ENCODE measurements at regions of chr5 and their contacts with region 1.

Region 1: DNA sequence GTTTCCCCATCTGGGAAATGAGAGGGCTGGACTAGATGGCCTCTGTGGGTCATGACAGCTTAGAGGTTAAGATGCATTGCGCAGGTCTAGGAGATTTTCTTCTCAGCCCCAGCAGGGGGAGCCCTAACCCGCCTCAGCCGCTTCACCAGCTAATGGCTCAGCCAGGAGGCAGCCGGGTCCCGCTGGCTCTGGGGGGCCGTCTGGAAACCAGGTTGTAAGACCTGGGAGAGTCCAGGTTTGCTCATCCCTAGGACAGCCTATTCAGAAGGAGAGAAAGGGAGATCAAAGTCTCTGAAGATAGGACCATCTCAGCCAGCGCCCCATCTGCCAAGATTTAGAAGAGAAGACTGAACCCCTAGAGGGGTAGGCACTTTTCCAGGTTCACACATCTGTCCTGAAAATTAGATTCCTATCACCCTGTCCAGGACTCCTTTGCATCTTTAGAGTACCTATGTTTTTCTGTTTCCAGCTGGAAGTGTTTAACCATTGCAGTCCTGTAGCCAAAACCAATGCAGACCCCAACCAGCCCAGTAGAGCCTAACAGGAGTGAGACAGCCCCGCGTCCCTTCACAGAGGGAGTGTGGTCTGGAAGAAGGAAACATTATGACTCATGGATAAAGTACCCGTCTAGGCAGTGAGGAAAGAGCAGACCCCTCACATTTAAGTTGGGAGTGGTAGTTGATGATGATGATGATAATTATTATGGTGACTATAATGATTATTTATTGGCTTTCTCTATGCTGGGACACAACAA is 27.5 kb downstream of the SPARC start:
- DNase-seq: peak; percentile 50 to 87
- H3K4me3 ChIP-seq: no peak overlapping the region
- H3K27ac ChIP-seq: peak overlapping the region; percentile 72 to 93
- H3K4me1 ChIP-seq: peaks cover 5 to 19% of the 10 kb centered on the region in 2 donors
- H3K27me3 ChIP-seq: no peaks in the 10 kb centered on the region
- CTCF ChIP-seq: peak; percentile 87 to 92 (median 90)

Region 2: GRCh38 chr5:151384106-151384505 is 275.1 kb before region 1 on chr5:
- intact Hi-C with region 1: no loop called
- DNase-seq: no peak
- H3K4me3 ChIP-seq: no peak overlapping the region
- H3K27ac ChIP-seq: no peak overlapping the region
- H3K4me1 ChIP-seq: no peaks in the 10 kb centered on the region
- H3K27me3 ChIP-seq: no peaks in the 10 kb centered on the region
- CTCF ChIP-seq: no peak

Region 3: GRCh38 chr5:151699071-151699901 is 40.1 kb after region 1 on chr5:
- intact Hi-C with region 1: loop called (anchors 5 kb)
- DNase-seq: peak; percentile 37 to 91
- H3K4me3 ChIP-seq: peak overlapping the region in 1 of 2 donors; percentile 25
- H3K27ac ChIP-seq: peak overlapping the region; percentile 91 to 98
- H3K4me1 ChIP-seq: peaks cover 0 to 44% of the 10 kb centered on the region in 2 donors
- H3K27me3 ChIP-seq: no peaks in the 10 kb centered on the region
- CTCF ChIP-seq: no peak

Region 4: GRCh38 chr5:151740336-151740942 is 81.3 kb after region 1 on chr5:
- intact Hi-C with region 1: loop called (anchors 1 kb)
- DNase-seq: peak in 1 of 2 donors; percentile 87
- H3K4me3 ChIP-seq: peak overlapping the region in 1 of 2 donors; percentile 9
- H3K27ac ChIP-seq: peak overlapping the region; percentile 86 to 89
- H3K4me1 ChIP-seq: peaks cover 4 to 33% of the 10 kb centered on the region in 2 donors
- H3K27me3 ChIP-seq: no peaks in the 10 kb centered on the region
- CTCF ChIP-seq: peak; percentile 82 to 94 (median 92)

Region 5: DNA sequence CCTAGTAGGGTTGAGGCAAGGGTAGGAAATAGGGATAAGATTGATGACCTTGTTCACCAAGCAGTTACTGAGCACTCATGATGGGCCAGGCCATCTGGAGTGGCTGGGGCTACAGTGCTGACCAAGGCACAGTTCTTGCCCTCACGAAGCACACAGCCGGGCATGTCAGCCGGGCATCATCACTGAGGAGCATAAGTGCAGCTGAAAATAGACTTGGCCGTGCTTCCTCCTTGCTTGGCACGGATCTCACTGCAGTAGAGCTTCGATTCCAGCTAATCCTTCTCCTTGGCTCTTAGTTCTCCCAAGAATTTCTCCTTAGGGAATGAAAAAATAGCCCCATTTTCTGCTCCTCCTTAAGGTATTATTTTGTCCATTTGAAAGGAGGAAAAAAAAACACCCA is 629.3 kb after region 1 on chr5:
- intact Hi-C with region 1: loop called (anchors 10 kb)
- DNase-seq: peak in 1 of 2 donors; percentile 86
- H3K4me3 ChIP-seq: no peak overlapping the region
- H3K27ac ChIP-seq: peak overlapping the region; percentile 60 to 73
- H3K4me1 ChIP-seq: peaks cover 0 to 12% of the 10 kb centered on the region in 2 donors
- H3K27me3 ChIP-seq: no peaks in the 10 kb centered on the region
- CTCF ChIP-seq: no peak

Measured in ascending aorta (tissue), 2 donors.